K562 (cell line): ENCODE measurements at regions of chr9 and their contacts with region 1.

Region 1: DNA sequence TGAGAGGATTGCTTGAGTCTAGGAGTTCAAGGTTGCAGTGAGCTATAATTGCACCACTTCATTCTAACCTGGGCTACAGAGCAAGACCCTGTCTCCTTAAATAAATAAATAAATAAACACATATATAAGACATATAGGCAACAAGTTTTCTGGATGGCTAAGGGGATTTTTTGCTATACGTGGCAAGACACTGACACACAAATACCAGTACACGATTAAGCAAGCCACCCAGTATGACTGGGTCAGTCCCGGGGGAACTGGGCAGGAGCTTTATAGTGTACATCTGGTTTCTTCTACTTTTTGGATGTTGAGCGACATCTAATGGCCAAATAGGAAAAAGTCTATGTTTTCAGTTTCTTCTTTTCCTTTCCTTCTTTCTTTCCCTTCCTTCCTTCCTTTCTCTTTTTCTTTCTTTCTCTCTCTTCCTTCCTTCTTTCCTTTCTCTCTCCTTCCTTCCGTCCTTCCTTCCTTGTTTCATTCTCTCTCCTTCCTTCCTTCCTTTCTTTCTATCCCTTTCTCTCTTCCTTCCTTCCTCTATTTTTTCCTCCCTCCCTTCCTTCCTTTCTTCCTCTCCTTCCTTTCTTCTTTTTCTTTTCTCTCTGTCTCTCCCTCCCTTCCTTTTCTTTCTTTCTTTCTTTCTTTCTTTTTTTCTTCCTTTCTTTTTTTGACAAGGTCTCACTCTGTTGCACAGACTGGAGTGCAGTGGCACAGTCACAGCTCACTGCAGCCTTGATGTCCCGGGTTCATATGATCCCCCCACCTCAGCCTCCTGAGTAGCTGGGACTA is 47.0 kb upstream of the PLIN2 start:
- DNase-seq: peak in 2 of 4 experiments; percentile 44 to 63
- ATAC-seq: peak; percentile 94
- H3K4me3 ChIP-seq: no peak overlapping the region
- H3K27ac ChIP-seq: no peak overlapping the region
- H3K4me1 ChIP-seq: no peaks in the 10 kb centered on the region; a peak in 2 of 5 replicates
- H3K27me3 ChIP-seq: no peaks in the 10 kb centered on the region
- CTCF ChIP-seq: peak; percentile 16 to 64 (median 52); a peak in 5 of 6 replicates
- EP300 ChIP-seq: no peak
- POLR2A ChIP-seq: no peak
- RAD21 ChIP-seq: peak; percentile 68 to 81

Region 2: DNA sequence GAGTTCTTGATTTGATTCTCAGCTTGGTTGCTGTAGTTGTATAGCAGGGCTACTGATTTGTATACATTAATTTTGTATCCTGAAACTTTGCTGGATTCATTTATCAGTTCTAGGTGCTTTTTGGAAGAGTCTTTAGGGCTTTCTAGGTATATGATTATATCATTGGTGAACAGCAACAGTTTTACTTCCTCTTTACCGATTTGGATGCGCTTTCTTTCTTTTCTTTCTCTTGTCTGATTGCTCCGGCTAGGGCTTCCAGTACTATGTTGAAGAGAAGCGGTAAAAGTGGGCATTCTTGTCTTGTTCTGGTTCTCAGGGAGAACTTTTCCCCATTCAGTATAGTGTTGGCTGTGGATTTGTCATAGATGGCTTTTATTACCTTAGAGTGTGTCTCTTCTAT is 300.3 kb before region 1 on chr9:
- CTCF ChIA-PET with region 1: no interaction called
- POLR2A ChIA-PET with region 1: no interaction called
- in situ Hi-C with region 1: no loop called
- intact Hi-C with region 1: no loop called
- DNase-seq: no peak
- ATAC-seq: no peak
- H3K4me3 ChIP-seq: no peak overlapping the region
- H3K27ac ChIP-seq: no peak overlapping the region
- H3K4me1 ChIP-seq: no peaks in the 10 kb centered on the region
- H3K27me3 ChIP-seq: no peaks in the 10 kb centered on the region
- CTCF ChIP-seq: no peak
- EP300 ChIP-seq: no peak
- POLR2A ChIP-seq: no peak
- RAD21 ChIP-seq: no peak

Region 3: DNA sequence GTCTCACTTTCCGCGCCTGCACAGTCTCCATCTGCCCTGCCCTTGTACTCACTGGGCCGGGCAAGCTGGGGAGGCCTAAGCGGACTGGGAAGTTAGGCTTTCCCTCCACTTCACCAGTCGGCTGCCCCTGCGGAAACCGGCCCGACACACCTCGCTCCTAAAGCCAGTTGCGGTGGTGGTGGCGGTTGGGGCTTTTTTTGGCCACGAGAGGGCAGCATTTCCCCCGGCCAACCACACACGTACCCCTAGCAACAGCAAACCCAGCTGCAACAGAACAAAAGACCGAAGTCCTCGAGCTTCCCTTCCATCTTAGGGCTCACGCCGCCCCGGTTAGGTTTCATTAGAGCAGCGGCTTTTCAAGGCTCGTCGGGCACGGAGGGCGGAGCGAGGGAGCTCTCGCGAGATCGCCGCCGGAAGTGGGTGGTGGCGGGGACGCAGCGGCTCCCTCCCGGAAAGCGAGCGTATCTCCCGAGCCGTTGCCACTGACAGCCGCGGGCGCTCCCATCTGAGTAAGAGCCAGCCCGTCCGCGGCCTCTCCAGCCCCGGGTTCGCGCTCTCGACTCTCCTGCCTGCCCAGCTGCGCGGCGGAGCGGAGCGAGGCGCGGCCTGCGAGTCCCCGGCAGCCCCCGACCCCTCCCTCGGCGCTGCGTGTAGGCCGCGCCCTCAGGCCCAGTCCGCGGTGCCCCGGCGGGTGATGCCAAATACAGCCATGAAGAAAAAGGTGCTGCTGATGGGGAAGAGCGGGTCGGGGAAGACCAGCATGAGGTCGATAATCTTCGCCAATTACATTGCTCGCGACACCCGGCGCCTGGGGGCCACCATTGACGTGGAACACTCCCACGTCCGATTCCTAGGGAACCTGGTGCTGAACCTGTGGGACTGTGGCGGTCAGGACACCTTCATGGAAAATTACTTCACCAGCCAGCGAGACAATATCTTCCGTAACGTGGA is 125.1 kb before region 1 on chr9 and contains the start of gene RRAGA:
- CTCF ChIA-PET with region 1: no interaction called
- POLR2A ChIA-PET with region 1: interaction called, 3 read pairs
- in situ Hi-C with region 1: no loop called
- intact Hi-C with region 1: loop called (anchors 2 kb)
- DNase-seq: peak; percentile 88 to 92 (median 88)
- ATAC-seq: peak; percentile 90
- H3K4me3 ChIP-seq: peak within 1 kb of the TSS; percentile 82
- H3K27ac ChIP-seq: peak within 1 kb of the TSS; percentile 90
- H3K4me1 ChIP-seq: peaks cover 3 to 7% of the 10 kb centered on the region in 2 experiments; a peak in 4 of 5 replicates
- H3K27me3 ChIP-seq: no peaks in the 10 kb centered on the region
- CTCF ChIP-seq: peak; percentile 59 to 80 (median 71)
- EP300 ChIP-seq: 0 out of 2 replicates have a peak, but pooled peaks have one; percentile 2
- POLR2A ChIP-seq: peak; percentile 93
- RAD21 ChIP-seq: peak; percentile 35 to 59; a peak in 3 of 4 replicates
- polyA plus RNA-seq, gene RRAGA: 6.0 to 7.7 TPM

Region 4: DNA sequence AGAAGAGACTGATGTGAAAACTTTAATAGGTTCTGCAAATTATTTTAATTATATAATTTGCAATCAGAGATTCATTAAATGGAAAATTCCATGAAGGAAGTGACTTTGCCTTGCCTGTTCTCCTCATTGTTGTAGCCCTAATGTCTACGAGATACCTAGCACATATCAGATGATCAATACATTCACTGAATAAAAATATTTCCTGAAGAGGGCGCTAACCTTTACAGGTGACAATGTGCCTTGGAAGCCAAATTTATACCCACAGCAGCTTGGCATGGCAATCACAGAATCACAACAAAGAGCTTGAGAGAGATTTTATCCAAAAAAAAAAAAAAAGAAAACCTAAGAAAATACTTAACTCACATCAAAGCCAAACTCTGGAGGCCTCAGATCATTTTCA is 89.0 kb before region 1 on chr9:
- CTCF ChIA-PET with region 1: interaction called, 4 read pairs
- POLR2A ChIA-PET with region 1: no interaction called
- in situ Hi-C with region 1: no loop called
- intact Hi-C with region 1: loop called (anchors 5 kb)
- DNase-seq: peak in 2 of 4 experiments; percentile 6 to 9
- ATAC-seq: no peak
- H3K4me3 ChIP-seq: no peak overlapping the region
- H3K27ac ChIP-seq: no peak overlapping the region
- H3K4me1 ChIP-seq: no peaks in the 10 kb centered on the region
- H3K27me3 ChIP-seq: no peaks in the 10 kb centered on the region
- CTCF ChIP-seq: peak in 2 of 3 experiments; percentile 16 to 33; a peak in 1 of 6 replicates
- EP300 ChIP-seq: no peak
- POLR2A ChIP-seq: no peak
- RAD21 ChIP-seq: 0 out of 4 replicates have a peak, but pooled peaks of 1 of the 2 experiments have one; percentile 10

Region 5: GRCh38 chr9:19137282-19137681 is 37.0 kb before region 1 on chr9:
- CTCF ChIA-PET with region 1: no interaction called
- POLR2A ChIA-PET with region 1: no interaction called
- in situ Hi-C with region 1: no loop called
- intact Hi-C with region 1: loop called (anchors 2 kb)
- DNase-seq: no peak
- ATAC-seq: no peak
- H3K4me3 ChIP-seq: no peak overlapping the region
- H3K27ac ChIP-seq: no peak overlapping the region
- H3K4me1 ChIP-seq: peaks cover 0 to 9% of the 10 kb centered on the region in 2 experiments; a peak in 2 of 5 replicates
- H3K27me3 ChIP-seq: no peaks in the 10 kb centered on the region
- CTCF ChIP-seq: no peak
- EP300 ChIP-seq: no peak
- POLR2A ChIP-seq: no peak
- RAD21 ChIP-seq: no peak